Activated B cell treated with CpG ODN at 0.5 μM for 24 hours (primary cell): ENCODE measurements at regions of chr16 and their contacts with region 1.

Region 1: DNA sequence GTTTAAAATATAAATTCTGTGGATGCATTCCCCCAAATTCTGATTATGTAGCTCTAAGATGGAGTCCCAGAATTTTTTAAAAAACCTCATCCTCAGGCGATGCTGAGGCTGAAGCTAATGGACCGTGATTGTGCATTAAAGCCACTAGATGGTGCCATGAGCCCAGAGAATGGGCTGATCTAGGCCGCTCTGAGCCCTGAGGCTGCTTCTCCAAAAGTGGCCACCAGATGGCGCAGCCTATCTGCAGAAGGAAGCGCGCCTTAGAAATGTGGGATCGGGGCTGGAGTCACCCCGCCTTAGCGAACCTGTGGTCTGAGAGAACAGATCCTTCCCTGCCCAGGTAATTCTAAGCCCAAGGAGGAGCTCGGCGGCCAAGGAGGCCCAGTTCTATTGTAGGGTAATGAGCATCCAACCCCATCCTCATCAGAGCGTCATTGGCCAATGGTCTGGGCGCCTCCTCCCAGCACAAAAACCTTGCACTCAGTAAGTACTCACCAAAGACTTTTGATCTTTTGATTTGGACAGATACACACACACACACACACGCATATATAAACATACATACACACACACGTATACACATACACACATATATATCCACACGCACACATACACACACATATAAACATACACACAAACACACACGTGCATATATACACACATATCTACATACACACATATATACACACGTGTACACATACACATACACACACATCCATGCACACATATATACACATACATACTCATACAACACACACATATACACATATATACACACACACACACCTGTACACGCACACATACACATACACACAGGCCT is 13.7 kb upstream of the MMP2 start:
- DNase-seq: peak; percentile 73
- ATAC-seq: peak; percentile 98
- H3K4me3 Mint-ChIP-seq: no peak overlapping the region
- H3K27ac Mint-ChIP-seq: no peak overlapping the region
- H3K4me1 Mint-ChIP-seq: no peaks in the 10 kb centered on the region
- H3K27me3 Mint-ChIP-seq: no peaks in the 10 kb centered on the region
- CTCF ChIP-seq: peak; percentile 86

Region 2: DNA sequence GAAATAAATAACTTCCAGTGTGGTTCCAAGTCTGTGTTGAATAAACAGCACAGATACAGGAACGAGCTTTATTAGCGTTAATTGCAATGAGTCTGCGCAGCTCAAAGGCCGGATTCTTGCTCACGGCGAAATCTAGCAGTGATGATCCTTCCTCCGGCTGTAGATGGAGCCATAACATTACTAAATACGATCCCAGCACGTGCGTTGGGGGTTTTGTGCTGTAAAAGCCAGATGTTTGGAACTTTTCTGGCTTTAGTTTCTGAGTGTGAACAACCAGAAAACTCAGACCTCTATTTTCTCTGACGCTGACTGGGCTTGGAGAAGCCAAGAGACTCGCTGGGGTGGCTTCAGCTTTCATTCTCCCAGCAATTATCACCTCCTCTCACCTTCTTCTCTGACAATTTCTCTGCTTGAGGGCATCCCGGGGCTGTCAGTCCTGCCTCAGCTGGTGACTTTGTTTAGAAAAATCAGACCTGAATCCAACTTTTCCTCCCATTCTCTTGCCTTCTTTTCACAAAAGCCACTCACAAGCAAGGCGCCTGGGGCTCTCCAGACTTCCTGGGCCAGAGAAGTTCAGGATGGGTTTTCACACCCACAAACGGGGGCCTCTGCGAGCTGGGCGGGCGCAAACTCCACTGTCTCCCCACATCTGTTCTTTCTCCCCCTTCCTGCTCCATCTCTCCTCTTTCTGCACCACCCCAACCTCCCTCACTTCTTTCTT is 1915.2 kb before region 1 on chr16:
- CTCF ChIA-PET with region 1: interaction called, 4 read pairs
- POLR2A ChIA-PET with region 1: no interaction called
- intact Hi-C with region 1: loop called (anchors 2 kb)
- DNase-seq: no peak
- ATAC-seq: peak; percentile 72
- H3K4me3 Mint-ChIP-seq: no peak overlapping the region
- H3K27ac Mint-ChIP-seq: no peak overlapping the region
- H3K4me1 Mint-ChIP-seq: peaks cover 6% of the 10 kb centered on the region
- H3K27me3 Mint-ChIP-seq: peaks cover 19% of the 10 kb centered on the region
- CTCF ChIP-seq: peak; percentile 14

Region 3: DNA sequence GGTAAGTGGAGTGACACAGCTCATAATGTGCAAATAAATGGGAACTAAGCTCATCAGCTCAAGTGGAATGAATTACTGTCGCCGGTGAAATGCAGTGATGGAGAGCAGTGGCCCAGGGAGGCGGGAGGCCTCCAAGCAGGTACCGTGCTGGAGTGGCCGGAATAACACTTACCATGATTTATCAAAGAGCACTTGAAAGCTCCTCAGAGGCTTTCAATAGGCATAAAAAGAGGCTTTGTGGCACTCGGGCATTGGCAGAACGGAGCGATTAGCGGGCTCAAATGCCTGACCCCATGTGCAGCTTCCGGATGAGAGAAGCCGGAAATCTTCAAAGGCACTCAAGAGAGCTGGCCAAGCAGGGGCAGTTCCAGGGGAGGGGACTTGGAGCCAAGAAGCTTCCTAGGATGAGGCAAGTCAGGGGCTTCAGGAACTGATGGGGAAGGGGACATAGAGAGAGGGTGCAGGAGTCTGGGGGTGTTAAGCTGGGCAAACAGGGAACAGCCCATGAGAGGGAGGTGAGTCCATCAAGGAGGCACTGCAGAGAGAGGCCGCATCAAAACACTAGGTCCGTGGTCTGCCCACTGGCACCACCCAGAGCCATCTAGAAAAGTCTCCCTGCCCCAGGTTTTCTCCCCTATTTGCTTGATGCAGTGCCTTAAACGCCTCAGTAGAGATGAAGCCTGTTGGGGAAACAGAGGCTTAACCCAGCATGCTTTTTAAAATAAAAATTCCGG is 285.3 kb before region 1 on chr16:
- CTCF ChIA-PET with region 1: no interaction called
- POLR2A ChIA-PET with region 1: no interaction called
- intact Hi-C with region 1: no loop called
- DNase-seq: no peak
- ATAC-seq: no peak
- H3K4me3 Mint-ChIP-seq: no peak overlapping the region
- H3K27ac Mint-ChIP-seq: no peak overlapping the region
- H3K4me1 Mint-ChIP-seq: no peaks in the 10 kb centered on the region
- H3K27me3 Mint-ChIP-seq: peaks cover 6% of the 10 kb centered on the region
- CTCF ChIP-seq: no peak

Region 4: DNA sequence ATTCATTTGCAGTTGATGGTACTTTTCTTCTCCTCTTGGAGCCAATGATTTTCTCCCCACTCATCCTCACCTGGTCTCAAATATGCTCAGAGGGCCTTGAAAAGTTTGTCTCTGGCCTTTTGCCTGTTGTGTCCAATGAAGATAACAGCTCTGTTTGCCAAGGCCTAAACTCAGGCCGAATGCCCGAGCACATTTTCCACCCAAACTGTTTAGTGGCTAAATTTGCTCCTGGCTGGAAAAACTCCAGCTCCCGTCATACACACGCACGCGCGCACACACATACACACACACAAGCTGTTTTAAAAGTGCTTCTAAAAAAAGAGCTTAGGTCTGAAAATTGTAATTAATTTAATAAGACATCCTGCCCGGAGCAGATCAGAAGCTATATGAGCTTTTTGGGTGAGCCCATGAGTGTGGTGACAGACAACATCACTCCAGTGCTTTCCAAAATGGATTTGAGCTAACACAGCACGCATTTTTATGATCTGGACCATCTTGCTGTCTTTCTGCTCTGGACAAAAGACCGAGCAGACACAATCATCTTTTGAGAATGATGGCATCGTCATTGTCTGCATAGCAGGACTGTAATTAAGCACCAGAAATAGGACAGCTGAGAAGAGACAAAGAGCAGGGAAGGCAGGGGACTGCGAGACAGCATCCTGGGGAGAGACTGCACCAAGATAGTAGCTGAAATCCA is 92.3 kb before region 1 on chr16:
- CTCF ChIA-PET with region 1: no interaction called
- POLR2A ChIA-PET with region 1: no interaction called
- intact Hi-C with region 1: no loop called
- DNase-seq: no peak
- ATAC-seq: no peak
- H3K4me3 Mint-ChIP-seq: no peak overlapping the region
- H3K27ac Mint-ChIP-seq: no peak overlapping the region
- H3K4me1 Mint-ChIP-seq: peaks cover 9% of the 10 kb centered on the region
- H3K27me3 Mint-ChIP-seq: peaks cover 28% of the 10 kb centered on the region
- CTCF ChIP-seq: no peak

Region 5: GRCh38 chr16:55418585-55418984 is 46.7 kb before region 1 on chr16:
- CTCF ChIA-PET with region 1: no interaction called
- POLR2A ChIA-PET with region 1: no interaction called
- intact Hi-C with region 1: no loop called
- DNase-seq: no peak
- ATAC-seq: no peak
- H3K4me3 Mint-ChIP-seq: no peak overlapping the region
- H3K27ac Mint-ChIP-seq: no peak overlapping the region
- H3K4me1 Mint-ChIP-seq: no peaks in the 10 kb centered on the region
- H3K27me3 Mint-ChIP-seq: peaks cover 16% of the 10 kb centered on the region
- CTCF ChIP-seq: no peak

Region 6: DNA sequence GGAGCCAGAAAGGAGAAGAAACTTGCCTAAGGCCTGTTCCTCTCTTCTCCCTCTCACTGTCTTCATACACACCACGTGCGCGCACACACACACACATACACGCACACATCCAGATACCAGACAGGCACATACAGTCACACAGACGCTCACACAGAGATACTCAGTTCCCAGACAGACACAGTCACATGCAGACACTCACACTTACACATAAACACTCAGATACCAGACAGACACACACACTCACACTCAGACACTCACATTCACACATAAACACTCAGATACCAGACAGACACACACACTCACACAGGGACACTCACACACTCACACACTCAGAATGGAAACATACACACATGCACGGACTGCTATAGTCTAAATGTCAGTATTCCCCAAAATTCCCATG is 10.4 kb before region 1 on chr16:
- CTCF ChIA-PET with region 1: interaction called, 16 read pairs
- POLR2A ChIA-PET with region 1: no interaction called
- intact Hi-C with region 1: no loop called
- DNase-seq: no peak
- ATAC-seq: no peak
- H3K4me3 Mint-ChIP-seq: no peak overlapping the region
- H3K27ac Mint-ChIP-seq: no peak overlapping the region
- H3K4me1 Mint-ChIP-seq: no peaks in the 10 kb centered on the region
- H3K27me3 Mint-ChIP-seq: peaks cover 4% of the 10 kb centered on the region
- CTCF ChIP-seq: no peak

Region 7: GRCh38 chr16:55605754-55606336 is 140.6 kb after region 1 on chr16:
- CTCF ChIA-PET with region 1: no interaction called
- POLR2A ChIA-PET with region 1: no interaction called
- intact Hi-C with region 1: no loop called
- DNase-seq: no peak
- ATAC-seq: no peak
- H3K4me3 Mint-ChIP-seq: no peak overlapping the region
- H3K27ac Mint-ChIP-seq: no peak overlapping the region
- H3K4me1 Mint-ChIP-seq: no peaks in the 10 kb centered on the region
- H3K27me3 Mint-ChIP-seq: peaks cover 3% of the 10 kb centered on the region
- CTCF ChIP-seq: no peak

Region 8: GRCh38 chr16:55842369-55843104 is 377.2 kb after region 1 on chr16:
- CTCF ChIA-PET with region 1: interaction called, 11 read pairs
- POLR2A ChIA-PET with region 1: no interaction called
- intact Hi-C with region 1: no loop called
- DNase-seq: no peak
- ATAC-seq: no peak
- H3K4me3 Mint-ChIP-seq: no peak overlapping the region
- H3K27ac Mint-ChIP-seq: no peak overlapping the region
- H3K4me1 Mint-ChIP-seq: no peaks in the 10 kb centered on the region
- H3K27me3 Mint-ChIP-seq: peaks cover 18% of the 10 kb centered on the region
- CTCF ChIP-seq: no peak

Region 9: GRCh38 chr16:56317998-56318826 is 852.9 kb after region 1 on chr16:
- CTCF ChIA-PET with region 1: interaction called, 20 read pairs
- POLR2A ChIA-PET with region 1: no interaction called
- intact Hi-C with region 1: no loop called
- DNase-seq: peak; percentile 66
- ATAC-seq: peak; percentile 99
- H3K4me3 Mint-ChIP-seq: peak overlapping the region; percentile 52
- H3K27ac Mint-ChIP-seq: no peak overlapping the region
- H3K4me1 Mint-ChIP-seq: peaks cover 15% of the 10 kb centered on the region
- H3K27me3 Mint-ChIP-seq: peaks cover 4% of the 10 kb centered on the region
- CTCF ChIP-seq: peak; percentile 39